Activated CD8-positive, alpha-beta memory T cell treated with anti-CD3 and anti-CD28 coated beads, Interleukin-2, amount 10 ng/mL, durations not matched to agents 7 days and 5 days (primary cell): ENCODE measurements at regions of chr20 and their contacts with region 1.

Region 1: DNA sequence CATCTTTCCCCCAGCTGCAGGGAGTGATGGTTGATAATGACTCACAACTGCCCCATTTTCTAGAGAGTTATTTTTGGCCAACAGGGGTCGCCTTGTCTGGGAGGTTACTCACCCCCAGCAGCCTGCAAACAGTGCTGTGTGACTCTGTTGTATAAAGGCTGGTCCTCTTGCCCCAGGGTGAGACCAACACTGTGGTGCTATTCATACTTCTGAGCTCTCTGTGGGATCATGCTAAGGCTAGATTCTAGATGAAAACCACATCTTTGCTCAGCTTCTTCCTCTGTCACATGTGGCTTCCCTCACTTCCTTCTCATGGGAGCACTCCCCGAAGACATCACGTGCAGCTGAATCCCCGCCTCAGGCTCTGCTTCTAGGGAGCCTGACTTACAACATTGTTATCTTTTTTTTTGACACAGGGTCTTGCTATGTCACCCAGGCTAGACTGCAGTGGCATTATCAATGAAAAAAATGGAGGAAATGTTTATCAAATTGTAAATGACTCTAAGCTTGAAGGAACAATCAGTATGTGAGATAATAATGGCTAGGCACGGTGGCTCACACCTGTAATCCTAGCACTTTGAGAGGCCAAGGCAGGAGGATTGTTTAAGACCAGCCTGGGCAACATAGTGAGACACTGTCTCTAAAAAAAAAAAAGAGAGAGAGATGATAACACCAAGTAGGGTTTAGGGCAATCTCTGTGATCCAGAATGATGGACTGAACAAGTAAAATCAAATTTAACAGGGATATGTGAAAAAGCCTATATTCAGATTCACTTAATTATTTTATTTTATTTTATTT is 55.7 kb upstream of the SLC23A2 start:
- DNase-seq: peak; percentile 89
- ATAC-seq: peak; percentile 99
- H3K4me3 Mint-ChIP-seq: no peak overlapping the region
- H3K27ac Mint-ChIP-seq: peak overlapping the region; percentile 86
- H3K4me1 Mint-ChIP-seq: peaks cover 30% of the 10 kb centered on the region
- H3K27me3 Mint-ChIP-seq: no peaks in the 10 kb centered on the region

Region 2: GRCh38 chr20:4875578-4876067 is 181.4 kb before region 1 on chr20:
- CTCF ChIA-PET with region 1: no interaction called
- DNase-seq: no peak
- ATAC-seq: no peak
- H3K4me3 Mint-ChIP-seq: no peak overlapping the region
- H3K27ac Mint-ChIP-seq: no peak overlapping the region
- H3K4me1 Mint-ChIP-seq: peaks cover 8% of the 10 kb centered on the region
- H3K27me3 Mint-ChIP-seq: no peaks in the 10 kb centered on the region

Region 3: GRCh38 chr20:5039255-5039657 is 17.7 kb before region 1 on chr20:
- CTCF ChIA-PET with region 1: interaction called, 13 read pairs
- DNase-seq: peak; percentile 80
- ATAC-seq: peak; percentile 91
- H3K4me3 Mint-ChIP-seq: peak overlapping the region; percentile 34
- H3K27ac Mint-ChIP-seq: peak overlapping the region; percentile 64
- H3K4me1 Mint-ChIP-seq: peaks cover 18% of the 10 kb centered on the region
- H3K27me3 Mint-ChIP-seq: peaks cover 6% of the 10 kb centered on the region

Region 4: GRCh38 chr20:5078399-5078958 is 21.5 kb after region 1 on chr20:
- CTCF ChIA-PET with region 1: interaction called, 18 read pairs
- DNase-seq: peak; percentile 95
- ATAC-seq: peak; percentile 97
- H3K4me3 Mint-ChIP-seq: peak overlapping the region; percentile 70
- H3K27ac Mint-ChIP-seq: peak overlapping the region; percentile 99
- H3K4me1 Mint-ChIP-seq: peaks cover 56% of the 10 kb centered on the region
- H3K27me3 Mint-ChIP-seq: no peaks in the 10 kb centered on the region

Region 5: DNA sequence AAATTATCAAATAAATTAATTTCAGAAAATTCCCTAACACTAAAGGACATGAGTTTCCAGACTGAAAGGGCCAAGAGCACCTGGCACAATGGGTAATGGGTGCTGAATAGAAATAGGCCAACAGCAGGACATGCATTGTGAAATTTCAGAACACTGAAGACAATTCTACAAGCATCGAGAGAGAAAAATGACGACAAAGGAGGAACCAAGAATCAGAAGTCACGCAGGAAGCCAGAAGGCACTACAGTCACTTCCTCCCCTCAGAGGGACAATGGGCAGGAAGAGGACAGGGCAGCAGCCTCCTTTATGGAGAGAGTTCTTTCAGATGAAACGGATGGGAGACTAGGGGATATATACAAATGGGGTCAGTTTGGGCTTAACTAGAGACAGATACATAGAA is 33.2 kb after region 1 on chr20:
- CTCF ChIA-PET with region 1: interaction called, 109 read pairs
- DNase-seq: no peak
- ATAC-seq: peak; percentile 61
- H3K4me3 Mint-ChIP-seq: no peak overlapping the region
- H3K27ac Mint-ChIP-seq: peak overlapping the region; percentile 75
- H3K4me1 Mint-ChIP-seq: peaks cover 13% of the 10 kb centered on the region
- H3K27me3 Mint-ChIP-seq: no peaks in the 10 kb centered on the region

Region 6: GRCh38 chr20:5297280-5298004 is 240.4 kb after region 1 on chr20:
- CTCF ChIA-PET with region 1: no interaction called
- DNase-seq: no peak
- ATAC-seq: no peak
- H3K4me3 Mint-ChIP-seq: no peak overlapping the region
- H3K27ac Mint-ChIP-seq: no peak overlapping the region
- H3K4me1 Mint-ChIP-seq: peaks cover 10% of the 10 kb centered on the region
- H3K27me3 Mint-ChIP-seq: peaks cover 30% of the 10 kb centered on the region